Mammary epithelial cell (primary cell): ENCODE measurements at regions of chr2 and their contacts with region 1.

Region 1: DNA sequence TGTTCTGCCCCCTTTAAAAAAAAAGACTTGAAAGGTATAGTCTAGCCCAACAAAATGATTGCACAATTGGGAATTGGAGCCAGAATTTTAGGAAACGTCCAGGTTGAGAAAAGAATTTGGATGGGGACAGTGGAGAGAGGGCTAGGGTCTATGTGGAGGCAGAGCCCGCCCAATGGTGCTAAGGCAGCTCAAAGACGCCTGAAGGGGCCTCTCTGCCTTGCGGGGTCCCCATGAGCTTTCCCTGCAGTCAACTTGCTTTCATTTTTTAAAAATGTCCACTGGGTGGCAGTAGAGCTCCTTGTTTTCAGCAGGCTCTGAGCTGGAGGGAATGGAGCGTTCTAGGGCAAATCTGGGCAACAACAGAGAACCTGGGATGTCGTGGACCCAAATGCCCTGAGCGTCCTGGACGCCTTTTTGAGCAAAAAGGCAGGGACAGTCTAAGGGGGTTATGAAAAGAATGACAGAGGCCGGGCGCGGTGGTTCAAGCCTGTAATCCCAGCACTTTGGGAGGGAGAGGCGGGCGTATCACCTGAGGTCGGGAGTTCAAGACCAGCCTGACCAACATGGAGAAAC is 40.2 kb upstream of the ITM2C start:
- DNase-seq: peak; percentile 55
- H3K4me3 ChIP-seq: peak overlapping the region in 2 of 3 experiments; percentile 27 to 28
- H3K27ac ChIP-seq: no peak overlapping the region
- H3K4me1 ChIP-seq: peaks cover 6% of the 10 kb centered on the region
- H3K27me3 ChIP-seq: no peaks in the 10 kb centered on the region
- CTCF ChIP-seq: peak; percentile 49 to 66

Region 2: DNA sequence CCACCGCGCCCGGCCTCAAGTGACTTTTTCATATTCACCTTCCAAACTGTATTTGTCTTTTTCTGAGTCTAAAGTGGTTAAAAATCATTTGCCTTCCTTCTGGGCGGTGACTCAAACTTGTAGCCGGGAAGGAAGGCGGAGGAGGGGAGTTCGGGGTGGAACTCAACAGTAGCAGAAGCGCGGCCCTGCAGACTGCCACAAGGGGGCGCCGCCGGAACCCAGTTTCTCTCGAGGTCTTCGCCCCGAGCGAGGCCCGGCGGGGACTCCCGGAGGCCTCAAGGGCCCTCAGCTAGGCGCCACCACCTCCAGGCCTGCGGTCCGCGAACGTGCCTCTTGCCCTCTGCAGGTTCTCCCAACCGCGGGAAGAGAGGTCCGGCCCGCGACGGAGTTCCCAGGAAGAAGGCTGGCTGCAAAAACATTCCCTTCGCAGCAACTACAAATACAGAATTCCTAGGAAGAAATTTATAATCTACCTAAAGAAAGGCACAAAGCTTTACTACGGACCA is 23.4 kb after region 1 on chr2:
- CTCF ChIA-PET with region 1: no interaction called
- dilution Hi-C with region 1: no loop called
- in situ Hi-C with region 1: no loop called
- intact Hi-C with region 1: loop called (anchors 1 kb)
- DNase-seq: peak; percentile 68
- H3K4me3 ChIP-seq: peak overlapping the region in 2 of 3 experiments; percentile 20 to 31
- H3K27ac ChIP-seq: no peak overlapping the region
- H3K4me1 ChIP-seq: peaks cover 3% of the 10 kb centered on the region
- H3K27me3 ChIP-seq: peaks cover 5% of the 10 kb centered on the region
- CTCF ChIP-seq: peak; percentile 66 to 86

Region 3: DNA sequence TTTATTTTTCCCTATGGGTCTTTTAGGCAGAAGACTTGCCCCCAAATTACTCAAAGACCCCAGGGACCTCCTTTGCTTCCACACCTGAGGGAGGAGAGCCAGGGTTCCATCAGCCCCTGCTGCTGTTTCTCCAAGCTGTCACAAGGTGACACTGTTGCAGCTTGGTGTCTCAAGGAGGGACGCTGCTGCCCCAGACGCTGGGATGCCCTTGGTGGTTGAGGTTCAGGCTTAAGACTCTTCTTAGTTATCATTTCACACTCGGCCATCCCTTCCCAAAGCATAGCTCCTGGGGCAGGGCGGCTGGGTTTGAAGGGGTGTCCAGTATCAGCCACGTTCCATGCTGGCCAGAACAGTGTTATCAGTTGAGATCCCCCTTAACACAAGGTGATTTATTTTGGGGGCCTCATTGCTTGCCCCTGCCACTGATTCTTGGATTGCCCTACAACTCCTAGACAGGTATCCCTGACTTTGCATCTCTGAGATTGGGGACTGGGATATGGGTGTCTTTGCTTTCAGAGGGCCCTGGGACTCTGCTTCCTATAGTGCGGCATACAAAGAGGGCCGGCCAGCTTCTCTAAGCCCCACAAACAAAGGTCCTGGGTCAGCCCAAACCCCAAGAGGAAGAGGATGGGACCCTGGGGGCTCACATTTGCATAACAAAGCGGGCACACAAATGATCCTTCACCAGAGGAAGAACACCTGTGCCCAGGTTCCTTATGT is 77.8 kb after region 1 on chr2:
- CTCF ChIA-PET with region 1: no interaction called
- dilution Hi-C with region 1: no loop called
- in situ Hi-C with region 1: no loop called
- intact Hi-C with region 1: loop called (anchors 2 kb)
- DNase-seq: peak; percentile 41
- H3K4me3 ChIP-seq: no peak overlapping the region
- H3K27ac ChIP-seq: no peak overlapping the region
- H3K4me1 ChIP-seq: no peaks in the 10 kb centered on the region
- H3K27me3 ChIP-seq: no peaks in the 10 kb centered on the region
- CTCF ChIP-seq: peak; percentile 94 to 96

Region 4: GRCh38 chr2:230987137-230988020 is 162.9 kb after region 1 on chr2:
- CTCF ChIA-PET with region 1: interaction called, 9 read pairs
- dilution Hi-C with region 1: no loop called
- in situ Hi-C with region 1: loop called in 1 of 2 experiments (anchors 5 kb)
- intact Hi-C with region 1: loop called (anchors 1 kb)
- DNase-seq: peak; percentile 44
- H3K4me3 ChIP-seq: peak overlapping the region; percentile 6 to 14 (median 10)
- H3K27ac ChIP-seq: no peak overlapping the region
- H3K4me1 ChIP-seq: no peaks in the 10 kb centered on the region
- H3K27me3 ChIP-seq: no peaks in the 10 kb centered on the region
- CTCF ChIP-seq: peak; percentile 64 to 93

Region 5: DNA sequence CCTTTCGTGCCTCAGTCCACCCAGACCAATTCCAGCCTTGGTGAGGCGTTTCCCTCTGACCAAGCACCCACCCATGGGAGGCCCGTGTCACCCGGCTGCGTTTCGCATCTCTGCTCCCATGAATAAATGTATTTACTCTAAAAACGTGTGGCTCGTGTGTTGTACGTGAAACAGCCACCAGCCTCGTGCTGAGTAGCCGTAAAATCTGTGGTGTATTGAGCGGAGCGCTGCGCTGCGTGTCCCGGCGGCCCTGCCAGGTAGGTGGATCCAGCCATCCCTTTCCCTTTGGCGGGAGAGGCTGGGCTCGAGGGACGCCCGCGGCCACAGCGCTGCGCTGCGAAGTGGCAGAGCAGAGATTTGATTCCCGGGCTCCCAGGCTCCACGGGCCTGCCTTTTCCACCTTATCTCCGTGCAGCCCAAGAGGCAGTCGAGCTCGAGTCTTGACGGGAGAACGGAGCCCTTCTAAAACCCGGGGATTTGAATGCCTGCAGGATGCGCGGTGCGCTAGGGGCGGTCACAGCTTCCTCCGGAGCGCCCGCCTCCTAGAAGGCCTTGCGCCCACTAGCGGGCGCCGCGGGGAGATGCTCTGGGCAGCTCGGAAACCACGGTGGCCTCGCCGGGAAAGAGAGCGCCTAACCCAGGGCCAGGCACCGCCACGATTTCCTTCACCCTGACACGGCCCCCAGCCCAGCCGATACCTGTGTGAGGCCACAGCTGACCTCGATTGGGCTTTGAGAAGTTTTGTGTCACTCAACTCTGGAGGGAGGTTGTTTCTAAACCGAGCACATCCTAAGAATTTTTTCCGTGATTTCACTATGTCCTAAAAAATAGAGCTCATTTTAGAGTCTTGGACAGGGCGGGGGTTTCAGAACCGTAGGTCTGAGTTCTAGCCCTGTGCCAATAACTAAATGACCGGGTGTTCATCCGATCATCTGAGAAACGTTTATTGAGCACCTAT is 228.3 kb after region 1 on chr2:
- CTCF ChIA-PET with region 1: interaction called, 6 read pairs
- dilution Hi-C with region 1: no loop called
- in situ Hi-C with region 1: no loop called
- intact Hi-C with region 1: loop called (anchors 2 kb)
- DNase-seq: peak; percentile 77
- H3K4me3 ChIP-seq: peak overlapping the region; percentile 59 to 62 (median 60)
- H3K27ac ChIP-seq: no peak overlapping the region
- H3K4me1 ChIP-seq: peaks cover 7% of the 10 kb centered on the region
- H3K27me3 ChIP-seq: no peaks in the 10 kb centered on the region
- CTCF ChIP-seq: peak; percentile 72 to 91

Region 6: DNA sequence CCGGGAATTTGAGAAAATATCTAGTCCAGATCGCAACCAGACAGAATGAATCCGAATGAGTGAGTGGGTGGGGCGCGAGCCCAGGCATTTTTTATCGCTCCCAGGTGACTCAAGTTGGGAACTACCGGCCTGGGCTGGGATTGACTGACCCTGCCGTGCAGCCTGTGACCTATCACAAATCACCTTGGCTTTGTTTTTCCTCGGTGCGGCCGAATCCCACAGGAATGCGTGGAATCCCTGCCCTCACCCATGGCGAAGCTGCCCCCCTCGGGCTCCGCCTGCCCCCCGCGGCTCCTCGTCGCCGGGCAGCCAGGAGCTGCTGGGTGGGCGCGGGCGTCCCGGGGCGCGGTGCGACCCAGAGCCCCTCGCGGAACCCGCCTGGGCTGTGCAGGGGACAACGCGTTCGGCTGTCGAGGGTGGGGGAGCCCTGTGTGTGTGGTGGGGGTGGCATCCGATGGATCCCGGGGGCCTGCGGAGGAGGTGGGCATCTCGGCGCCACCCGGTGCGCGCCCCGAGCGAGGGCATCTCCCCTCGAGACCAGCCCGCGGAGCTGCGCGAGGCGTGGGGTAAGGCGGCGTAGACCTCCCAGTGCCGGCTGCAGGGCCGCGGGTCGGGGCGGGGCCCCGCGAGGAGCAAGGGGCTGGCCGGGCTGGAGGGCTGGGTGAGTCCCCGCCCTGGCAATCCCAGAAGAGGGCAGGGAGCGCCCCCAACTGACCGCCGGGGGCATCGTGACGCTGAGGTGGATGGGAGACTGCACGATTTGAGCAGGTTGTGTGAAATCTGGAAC is 587.5 kb after region 1 on chr2:
- CTCF ChIA-PET with region 1: no interaction called
- dilution Hi-C with region 1: no loop called
- in situ Hi-C with region 1: no loop called
- intact Hi-C with region 1: loop called (anchors 10 kb)
- DNase-seq: peak; percentile 75
- H3K4me3 ChIP-seq: peak overlapping the region; percentile 59 to 68 (median 61)
- H3K27ac ChIP-seq: peak overlapping the region; percentile 48
- H3K4me1 ChIP-seq: peaks cover 12% of the 10 kb centered on the region
- H3K27me3 ChIP-seq: no peaks in the 10 kb centered on the region
- CTCF ChIP-seq: peak; percentile 91

Region 7: GRCh38 chr2:231452799-231453508 is 628.5 kb after region 1 on chr2:
- CTCF ChIA-PET with region 1: no interaction called
- dilution Hi-C with region 1: no loop called
- in situ Hi-C with region 1: no loop called
- intact Hi-C with region 1: loop called (anchors 1 kb)
- DNase-seq: no peak
- H3K4me3 ChIP-seq: no peak overlapping the region
- H3K27ac ChIP-seq: no peak overlapping the region
- H3K4me1 ChIP-seq: no peaks in the 10 kb centered on the region
- H3K27me3 ChIP-seq: no peaks in the 10 kb centered on the region
- CTCF ChIP-seq: no peak